ENCODE measurements at regions of chr16 and their contacts with region 1.

Region 1: DNA sequence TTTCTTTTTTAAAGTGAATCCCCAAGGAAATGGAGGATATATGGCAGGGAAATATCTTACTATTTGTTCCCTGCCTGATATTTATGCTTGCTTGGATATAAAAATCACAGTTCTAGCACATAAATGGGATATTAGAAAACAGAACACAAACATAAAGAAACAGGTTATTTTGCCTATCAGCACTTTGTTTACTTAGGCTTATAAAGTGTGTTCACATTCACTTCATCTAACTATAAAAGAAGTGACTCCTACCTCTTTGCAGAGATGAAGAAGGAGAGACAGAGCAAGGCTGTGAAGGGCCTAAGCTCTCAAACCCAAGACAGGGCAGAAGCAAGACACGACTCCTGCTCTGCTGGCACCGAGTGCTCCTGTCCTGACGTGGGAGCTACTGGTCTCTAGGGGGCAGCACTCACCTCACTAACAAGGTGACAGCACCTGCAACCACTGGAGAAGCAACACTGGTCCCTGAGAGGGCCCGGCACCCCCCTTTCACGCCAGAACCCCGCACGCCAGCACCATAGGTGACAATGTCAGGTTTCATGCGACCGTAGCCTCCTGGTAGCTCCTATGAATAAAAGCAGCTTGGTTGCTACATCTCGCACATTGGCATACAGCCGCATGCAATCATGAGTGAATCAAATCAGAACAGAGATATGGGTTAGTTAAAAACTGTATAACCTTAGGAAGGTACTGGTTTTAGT is 32.0 kb downstream of the MBTPS1 start:
- DNase-seq: peak; percentile 64
- ATAC-seq: peak; percentile 97
- H3K4me3 ChIP-seq: no peak overlapping the region
- H3K27ac ChIP-seq: no peak overlapping the region
- H3K4me1 ChIP-seq: no peaks in the 10 kb centered on the region
- H3K27me3 ChIP-seq: no peaks in the 10 kb centered on the region
- CTCF ChIP-seq: peak; percentile 87 to 99 (median 98)
- POLR2A ChIP-seq: no peak
- RAD21 ChIP-seq: peak; percentile 94

Region 2: DNA sequence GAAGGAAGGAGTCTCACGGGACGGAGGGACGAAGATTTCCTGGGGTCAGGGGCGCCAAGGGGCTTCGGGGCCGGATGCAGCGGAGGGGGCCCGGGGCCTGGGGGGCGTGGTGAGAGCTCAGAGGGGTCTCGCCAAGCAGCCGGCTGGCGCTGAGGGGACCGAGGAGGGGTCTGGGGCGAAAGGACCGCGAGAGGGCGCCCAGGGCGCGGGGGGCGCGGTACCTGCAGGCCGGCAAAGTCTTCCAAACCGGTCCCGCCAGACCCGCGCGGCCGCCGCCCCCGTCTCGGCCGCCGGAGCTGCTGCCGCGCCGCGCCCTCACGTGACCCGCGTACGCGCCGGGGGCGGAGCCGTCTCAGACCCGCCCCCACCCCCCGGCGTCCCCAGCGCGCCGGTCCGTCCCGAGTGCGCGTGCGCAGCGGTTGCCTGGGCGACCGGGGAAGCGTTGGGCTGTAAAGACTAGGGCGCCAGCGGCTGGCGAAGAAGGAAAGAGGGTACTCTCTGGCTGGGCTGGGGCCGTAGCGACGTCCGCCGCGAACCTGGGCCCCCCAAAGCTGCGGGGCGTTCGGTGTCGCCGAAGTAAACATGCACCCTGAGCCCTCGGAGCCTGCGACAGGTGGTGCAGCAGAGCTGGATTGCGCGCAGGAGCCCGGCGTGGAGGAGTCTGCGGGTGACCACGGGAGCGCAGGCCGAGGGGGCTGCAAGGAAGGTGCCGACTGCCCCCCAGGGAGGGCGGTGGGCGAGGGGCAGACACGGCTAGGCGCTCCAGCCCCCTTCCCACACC is 60.3 kb after region 1 on chr16 and contains the starts of genes DNAAF1 and HSDL1:
- CTCF ChIA-PET with region 1: interaction called, 8 read pairs
- POLR2A ChIA-PET with region 1: no interaction called
- RAD21 ChIA-PET with region 1: no interaction called
- intact Hi-C with region 1: loop called (anchors 1 kb)
- DNase-seq: peak; percentile 71
- ATAC-seq: peak; percentile 83
- H3K4me3 ChIP-seq: peak within 1 kb of the TSS; percentile 66 to 93
- H3K27ac ChIP-seq: peak within 1 kb of the TSS; percentile 46
- H3K4me1 ChIP-seq: peaks cover 8 to 21% of the 10 kb centered on the region in 2 experiments; a peak in 2 of 4 replicates
- H3K27me3 ChIP-seq: no peaks in the 10 kb centered on the region
- CTCF ChIP-seq: peak in 1 of 3 experiments; percentile 22; a peak in 1 of 6 replicates
- POLR2A ChIP-seq: peak; percentile 52
- RAD21 ChIP-seq: no peak
- total RNA-seq, gene DNAAF1: 0.30 TPM
- total RNA-seq, gene HSDL1: 35.8 TPM

Region 3: DNA sequence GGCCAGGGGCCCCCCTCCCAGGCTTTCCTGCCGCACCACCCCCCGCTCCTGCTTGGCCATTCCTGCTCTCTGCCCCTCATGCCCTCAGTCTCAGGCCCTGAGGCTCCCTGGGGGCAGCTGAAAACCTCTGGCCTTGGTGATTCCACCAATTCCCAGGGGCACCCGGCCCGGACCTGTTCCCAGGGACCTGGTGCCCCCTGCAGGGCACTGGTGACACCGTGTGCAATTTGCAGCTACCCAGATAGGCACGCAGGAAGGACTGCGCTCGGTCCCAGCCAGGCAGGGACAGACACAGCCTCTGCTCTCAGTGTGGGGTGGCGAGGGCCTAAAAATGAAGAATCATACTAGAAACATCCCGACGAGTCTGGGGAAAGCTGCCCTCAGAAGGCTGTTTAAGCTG is 223.4 kb after region 1 on chr16:
- CTCF ChIA-PET with region 1: interaction called, 22 read pairs
- POLR2A ChIA-PET with region 1: no interaction called
- RAD21 ChIA-PET with region 1: interaction called, 3 to 4 read pairs
- intact Hi-C with region 1: loop called (anchors 1 kb)
- DNase-seq: peak; percentile 63
- ATAC-seq: peak; percentile 89
- H3K4me3 ChIP-seq: no peak overlapping the region
- H3K27ac ChIP-seq: no peak overlapping the region
- H3K4me1 ChIP-seq: peaks cover 6 to 16% of the 10 kb centered on the region in 2 experiments; a peak in 3 of 4 replicates
- H3K27me3 ChIP-seq: no peaks in the 10 kb centered on the region
- CTCF ChIP-seq: peak; percentile 88 to 95 (median 93)
- POLR2A ChIP-seq: no peak
- RAD21 ChIP-seq: peak; percentile 98

Region 4: DNA sequence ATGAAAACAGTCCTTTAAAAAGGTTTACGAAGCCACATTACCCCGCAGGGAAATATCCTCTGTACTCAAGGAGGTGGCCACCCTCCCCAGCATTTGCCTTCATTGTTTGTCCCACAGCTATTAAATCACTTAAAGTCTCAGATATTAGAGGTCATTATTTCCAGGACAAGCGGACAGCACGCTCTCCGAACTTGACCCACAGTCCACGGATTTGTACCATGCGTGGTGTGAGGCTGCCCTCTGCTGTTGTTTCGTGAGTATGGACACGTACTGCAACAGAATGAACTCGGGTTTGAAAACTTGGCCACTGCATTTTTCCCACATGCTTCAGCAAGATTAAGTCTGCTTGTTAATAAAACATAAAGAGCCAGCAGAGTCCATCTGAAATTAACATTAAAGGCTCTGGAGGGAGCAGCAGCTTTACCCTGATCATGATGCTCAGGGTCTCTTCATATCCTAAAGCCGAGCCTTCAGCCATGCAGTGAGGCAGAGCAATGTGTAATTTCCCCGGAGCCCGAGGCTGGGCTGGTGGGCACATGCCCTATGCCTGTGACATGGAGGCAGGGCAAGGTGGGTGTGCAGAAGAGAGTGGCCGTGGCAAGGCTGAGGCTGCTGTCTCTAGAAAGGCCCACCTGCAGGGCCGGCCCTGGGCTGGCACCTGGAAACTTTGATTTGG is 400.0 kb after region 1 on chr16:
- CTCF ChIA-PET with region 1: no interaction called
- POLR2A ChIA-PET with region 1: no interaction called
- RAD21 ChIA-PET with region 1: no interaction called
- intact Hi-C with region 1: loop called (anchors 1 kb)
- DNase-seq: peak; percentile 41
- ATAC-seq: peak; percentile 84
- H3K4me3 ChIP-seq: no peak overlapping the region
- H3K27ac ChIP-seq: no peak overlapping the region
- H3K4me1 ChIP-seq: no peaks in the 10 kb centered on the region
- H3K27me3 ChIP-seq: no peaks in the 10 kb centered on the region
- CTCF ChIP-seq: peak; percentile 75 to 91 (median 80)
- POLR2A ChIP-seq: no peak
- RAD21 ChIP-seq: peak; percentile 95

Measured in HCT116 (cell line).